ENCODE measurements at regions of chr1 and their contacts with region 1.

Region 1: DNA sequence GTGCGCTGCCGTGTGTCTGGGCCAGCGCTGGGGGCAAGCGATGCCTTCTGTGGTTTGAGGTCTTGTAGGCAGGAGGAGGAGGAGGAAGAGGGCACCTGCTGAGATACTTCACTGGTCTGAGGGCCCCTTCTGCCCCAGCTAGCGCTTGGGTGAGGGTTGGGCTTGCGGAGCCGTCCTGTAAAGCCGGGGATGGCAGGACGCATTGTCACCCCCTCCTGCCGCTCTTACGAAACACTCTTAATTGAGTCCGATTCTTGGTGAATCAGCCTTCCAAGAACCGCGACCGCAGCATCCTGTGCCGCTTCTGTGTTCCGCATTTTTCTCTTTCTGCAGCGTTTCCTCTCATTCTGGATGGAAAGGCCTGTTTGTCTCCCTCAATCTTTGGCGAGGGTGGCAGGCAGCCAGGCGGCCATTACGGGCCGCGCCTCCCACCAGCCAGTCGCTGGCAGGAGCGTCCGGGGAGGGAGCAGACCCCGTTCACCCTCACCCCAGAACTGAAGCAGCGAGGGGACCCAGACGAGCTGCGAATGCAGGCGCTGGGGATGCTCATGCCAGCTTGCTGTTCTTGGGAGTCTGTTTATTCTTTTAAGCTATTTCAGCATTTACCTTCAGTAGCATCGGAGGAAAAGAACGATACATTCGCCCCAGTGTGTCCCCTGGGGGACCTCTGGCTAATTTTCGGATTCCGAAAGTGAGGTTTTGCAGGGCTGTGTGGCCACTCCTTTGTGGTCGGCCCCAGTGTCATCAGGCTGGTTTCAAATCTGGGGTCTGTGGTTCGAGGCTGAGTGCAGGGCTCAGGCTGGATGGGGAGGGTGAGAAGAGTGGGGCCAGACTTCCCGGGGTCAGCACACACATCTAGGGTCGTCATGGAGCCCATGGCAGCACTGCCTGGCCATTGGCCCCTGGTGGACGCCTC is 62.7 kb downstream of the SKI start:
- DNase-seq: peak; percentile 37 to 88 (median 74)
- ATAC-seq: peak; percentile 61 to 84 (median 82)
- H3K4me3 ChIP-seq: peak overlapping the region; percentile 28 to 48
- H3K4me3 Mint-ChIP-seq: peak overlapping the region; percentile 73 to 91 (median 83)
- H3K27ac ChIP-seq: peak overlapping the region; percentile 80
- H3K27ac Mint-ChIP-seq: peak overlapping the region; percentile 90 to 95
- H3K4me1 ChIP-seq: peaks cover 59 to 89% of the 10 kb centered on the region in 2 experiments
- H3K4me1 Mint-ChIP-seq: peaks cover 88 to 94% (median 92%) of the 10 kb centered on the region in 3 donors
- H3K27me3 ChIP-seq: peaks cover 0 to 2% of the 10 kb centered on the region in 2 experiments
- H3K27me3 Mint-ChIP-seq: no peaks in the 10 kb centered on the region

Region 2: GRCh38 chr1:2115681-2116341 is 175.0 kb before region 1 on chr1:
- CTCF ChIA-PET with region 1: no interaction called
- POLR2A ChIA-PET with region 1: no interaction called
- DNase-seq: no peak
- ATAC-seq: no peak
- H3K4me3 ChIP-seq: no peak overlapping the region
- H3K4me3 Mint-ChIP-seq: no peak overlapping the region
- H3K27ac ChIP-seq: no peak overlapping the region
- H3K27ac Mint-ChIP-seq: no peak overlapping the region
- H3K4me1 ChIP-seq: peaks cover 0 to 11% of the 10 kb centered on the region in 2 experiments
- H3K4me1 Mint-ChIP-seq: peaks cover 5 to 14% (median 13%) of the 10 kb centered on the region in 3 donors
- H3K27me3 ChIP-seq: no peaks in the 10 kb centered on the region
- H3K27me3 Mint-ChIP-seq: no peaks in the 10 kb centered on the region

Region 3: DNA sequence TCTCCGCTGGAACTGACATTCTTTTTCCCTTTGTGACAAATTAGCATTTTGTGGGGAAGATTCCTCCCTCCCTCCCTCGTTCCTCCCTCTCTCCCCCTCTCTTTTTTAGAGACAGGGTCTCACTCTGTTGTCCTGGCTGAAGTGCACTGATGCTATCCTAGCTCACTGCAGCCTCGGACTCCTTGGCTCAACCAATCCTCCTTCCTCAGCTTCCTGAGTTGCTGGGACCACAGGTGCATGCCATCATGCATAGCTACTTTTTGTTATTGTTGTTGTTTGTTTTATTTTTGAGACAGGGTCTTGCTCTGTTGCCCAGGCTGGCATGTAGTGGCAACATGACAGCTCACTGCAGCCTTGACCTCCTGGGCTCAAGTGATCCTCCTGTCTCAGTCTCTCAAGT is 69.6 kb before region 1 on chr1:
- CTCF ChIA-PET with region 1: no interaction called
- POLR2A ChIA-PET with region 1: interaction called in 1 of 2 experiments, 21 read pairs
- DNase-seq: no peak
- ATAC-seq: no peak
- H3K4me3 ChIP-seq: no peak overlapping the region
- H3K4me3 Mint-ChIP-seq: no peak overlapping the region
- H3K27ac ChIP-seq: no peak overlapping the region
- H3K27ac Mint-ChIP-seq: peak overlapping the region in 1 of 2 donors; percentile 68
- H3K4me1 ChIP-seq: peaks cover 0 to 2% of the 10 kb centered on the region in 2 experiments
- H3K4me1 Mint-ChIP-seq: peaks cover 2 to 8% (median 6%) of the 10 kb centered on the region in 3 donors
- H3K27me3 ChIP-seq: peaks cover 0 to under 1% of the 10 kb centered on the region in 2 experiments
- H3K27me3 Mint-ChIP-seq: no peaks in the 10 kb centered on the region

Region 4: DNA sequence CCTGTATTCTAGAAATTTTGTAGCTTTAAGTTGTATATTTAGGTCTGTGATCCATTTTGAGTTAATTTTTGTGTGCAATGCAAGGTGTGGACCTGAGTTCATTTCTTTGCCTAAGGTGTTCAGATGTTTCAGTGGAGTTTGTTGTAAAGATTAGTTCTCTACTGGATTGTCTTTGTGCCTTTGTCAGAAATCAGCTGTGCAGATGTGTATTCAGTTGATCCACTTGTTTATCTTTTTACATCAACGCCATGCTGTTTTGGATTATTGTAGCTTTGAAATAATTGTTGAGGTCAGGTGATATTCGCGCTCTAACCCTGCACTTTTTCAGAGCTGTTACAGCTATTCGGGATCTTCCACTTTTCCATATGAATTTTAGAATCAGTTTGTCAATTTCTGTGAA is 29.9 kb before region 1 on chr1:
- CTCF ChIA-PET with region 1: no interaction called
- POLR2A ChIA-PET with region 1: interaction called in 1 of 2 experiments, 11 read pairs
- DNase-seq: no peak
- ATAC-seq: no peak
- H3K4me3 ChIP-seq: no peak overlapping the region
- H3K4me3 Mint-ChIP-seq: peak overlapping the region in 1 of 3 donors; percentile 23
- H3K27ac ChIP-seq: no peak overlapping the region
- H3K27ac Mint-ChIP-seq: peak overlapping the region in 1 of 2 donors; percentile 15
- H3K4me1 ChIP-seq: peaks cover 16 to 61% of the 10 kb centered on the region in 2 experiments
- H3K4me1 Mint-ChIP-seq: peaks cover 67 to 79% (median 70%) of the 10 kb centered on the region in 3 donors
- H3K27me3 ChIP-seq: no peaks in the 10 kb centered on the region
- H3K27me3 Mint-ChIP-seq: no peaks in the 10 kb centered on the region

Region 5: GRCh38 chr1:2300851-2301606 is 10.2 kb after region 1 on chr1:
- CTCF ChIA-PET with region 1: interaction called in 1 of 2 experiments, 3 read pairs
- POLR2A ChIA-PET with region 1: interaction called, 3 to 12 read pairs
- DNase-seq: peak; percentile 80 to 99 (median 97)
- ATAC-seq: peak; percentile 84 to 88 (median 86)
- H3K4me3 ChIP-seq: peak overlapping the region; percentile 35 to 66
- H3K4me3 Mint-ChIP-seq: peak overlapping the region; percentile 73 to 81 (median 80)
- H3K27ac ChIP-seq: peak overlapping the region; percentile 100
- H3K27ac Mint-ChIP-seq: peak overlapping the region; percentile 90 to 95
- H3K4me1 ChIP-seq: peaks cover 34 to 92% of the 10 kb centered on the region in 2 experiments
- H3K4me1 Mint-ChIP-seq: peaks cover 49 to 68% (median 60%) of the 10 kb centered on the region in 3 donors
- H3K27me3 ChIP-seq: no peaks in the 10 kb centered on the region
- H3K27me3 Mint-ChIP-seq: no peaks in the 10 kb centered on the region